Natural killer cell (primary cell): ENCODE measurements at regions of chr3 and their contacts with region 1.

Region 1: DNA sequence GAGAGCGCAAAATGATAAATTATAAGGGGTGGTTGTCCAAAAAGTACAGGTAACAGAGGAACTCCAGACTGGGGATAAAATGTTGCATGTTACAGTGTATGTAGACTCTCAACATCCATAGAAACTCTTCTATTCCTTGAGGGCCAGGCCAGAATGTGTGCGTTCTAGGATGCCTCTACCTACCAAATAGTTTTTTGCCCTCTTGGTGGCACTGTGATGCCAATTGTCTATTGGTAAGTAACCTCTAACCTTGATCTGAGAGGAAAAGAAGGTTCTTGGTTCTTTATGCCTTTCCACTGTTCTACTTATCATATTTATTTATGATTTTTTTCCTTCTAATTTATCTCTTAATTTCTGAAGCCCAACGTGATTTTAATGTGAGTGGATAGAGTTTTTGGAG is 424.6 kb downstream of the GRM7 start:
- DNase-seq: no peak
- ATAC-seq: peak; percentile 50 to 74 (median 52)
- H3K4me3 ChIP-seq: no peak overlapping the region
- H3K4me3 Mint-ChIP-seq: no peak overlapping the region
- H3K27ac ChIP-seq: no peak overlapping the region
- H3K27ac Mint-ChIP-seq: no peak overlapping the region
- H3K4me1 ChIP-seq: peaks cover 1% of the 10 kb centered on the region
- H3K4me1 Mint-ChIP-seq: peaks cover 2 to 20% of the 10 kb centered on the region in 2 donors
- H3K27me3 ChIP-seq: no peaks in the 10 kb centered on the region
- H3K27me3 Mint-ChIP-seq: no peaks in the 10 kb centered on the region
- CTCF ChIP-seq: peak; percentile 33

Region 2: GRCh38 chr3:8111069-8111798 is 825.7 kb after region 1 on chr3:
- intact Hi-C with region 1: loop called (anchors 2 kb)
- DNase-seq: peak; percentile 18 to 67
- ATAC-seq: peak; percentile 82 to 95 (median 84)
- H3K4me3 ChIP-seq: no peak overlapping the region
- H3K4me3 Mint-ChIP-seq: peak overlapping the region; percentile 55
- H3K27ac ChIP-seq: no peak overlapping the region
- H3K27ac Mint-ChIP-seq: no peak overlapping the region
- H3K4me1 ChIP-seq: no peaks in the 10 kb centered on the region
- H3K4me1 Mint-ChIP-seq: peaks cover 0 to 7% of the 10 kb centered on the region in 2 donors
- H3K27me3 ChIP-seq: no peaks in the 10 kb centered on the region
- H3K27me3 Mint-ChIP-seq: peaks cover 11 to 14% of the 10 kb centered on the region in 2 donors
- CTCF ChIP-seq: peak; percentile 52

Region 3: GRCh38 chr3:8239718-8240695 is 954.5 kb after region 1 on chr3:
- intact Hi-C with region 1: loop called (anchors 5 kb)
- DNase-seq: peak in 1 of 2 donors; percentile 59
- ATAC-seq: peak; percentile 70 to 76 (median 70)
- H3K4me3 ChIP-seq: no peak overlapping the region
- H3K4me3 Mint-ChIP-seq: no peak overlapping the region
- H3K27ac ChIP-seq: no peak overlapping the region
- H3K27ac Mint-ChIP-seq: no peak overlapping the region
- H3K4me1 ChIP-seq: no peaks in the 10 kb centered on the region
- H3K4me1 Mint-ChIP-seq: peaks cover under 1 to 2% of the 10 kb centered on the region in 2 donors
- H3K27me3 ChIP-seq: no peaks in the 10 kb centered on the region
- H3K27me3 Mint-ChIP-seq: peaks cover 3 to 7% of the 10 kb centered on the region in 2 donors
- CTCF ChIP-seq: peak; percentile 91

Region 4: GRCh38 chr3:8301728-8302462 is 1016.4 kb after region 1 on chr3:
- intact Hi-C with region 1: loop called (anchors 5 kb)
- DNase-seq: peak in 1 of 2 donors; percentile 66
- ATAC-seq: peak in 2 of 3 donors; percentile 59 to 75
- H3K4me3 ChIP-seq: no peak overlapping the region
- H3K4me3 Mint-ChIP-seq: no peak overlapping the region
- H3K27ac ChIP-seq: no peak overlapping the region
- H3K27ac Mint-ChIP-seq: no peak overlapping the region
- H3K4me1 ChIP-seq: no peaks in the 10 kb centered on the region
- H3K4me1 Mint-ChIP-seq: peaks cover 9 to 11% of the 10 kb centered on the region in 2 donors
- H3K27me3 ChIP-seq: no peaks in the 10 kb centered on the region
- H3K27me3 Mint-ChIP-seq: peaks cover 0 to 6% of the 10 kb centered on the region in 2 donors
- CTCF ChIP-seq: peak; percentile 68